ENCODE measurements at regions of chr6 and their contacts with region 1.

Region 1: GRCh38 chr6:3231247-3232016 is 4.0 kb upstream of the TUBB2B start:
- DNase-seq: peak in 4 of 5 donors; percentile 63 to 79 (median 76)
- ATAC-seq: peak; percentile 77 to 87 (median 81)
- H3K4me3 ChIP-seq: peak overlapping the region; percentile 16 to 78 (median 64)
- H3K27ac ChIP-seq: peak overlapping the region; percentile 42 to 81 (median 69)
- H3K4me1 ChIP-seq: peaks cover 2 to 55% (median 38%) of the 10 kb centered on the region in 12 donors
- H3K27me3 ChIP-seq: peaks cover 22 to 87% (median 61%) of the 10 kb centered on the region in 9 donors
- CTCF ChIP-seq: no peak
- POLR2A ChIP-seq: no peak

Region 2: GRCh38 chr6:3139090-3139903 is 92.1 kb before region 1 on chr6:
- intact Hi-C with region 1: loop called in 1 of 10 experiments (anchors 5 kb)
- DNase-seq: peak; percentile 62 to 77 (median 67)
- ATAC-seq: peak; percentile 72 to 94 (median 91)
- H3K4me3 ChIP-seq: no peak overlapping the region
- H3K27ac ChIP-seq: peak overlapping the region in 11 of 12 donors; percentile 20 to 75 (median 53)
- H3K4me1 ChIP-seq: peaks cover 0 to 26% (median 5%) of the 10 kb centered on the region in 12 donors
- H3K27me3 ChIP-seq: no peaks in the 10 kb centered on the region
- CTCF ChIP-seq: no peak
- POLR2A ChIP-seq: no peak

Region 3: DNA sequence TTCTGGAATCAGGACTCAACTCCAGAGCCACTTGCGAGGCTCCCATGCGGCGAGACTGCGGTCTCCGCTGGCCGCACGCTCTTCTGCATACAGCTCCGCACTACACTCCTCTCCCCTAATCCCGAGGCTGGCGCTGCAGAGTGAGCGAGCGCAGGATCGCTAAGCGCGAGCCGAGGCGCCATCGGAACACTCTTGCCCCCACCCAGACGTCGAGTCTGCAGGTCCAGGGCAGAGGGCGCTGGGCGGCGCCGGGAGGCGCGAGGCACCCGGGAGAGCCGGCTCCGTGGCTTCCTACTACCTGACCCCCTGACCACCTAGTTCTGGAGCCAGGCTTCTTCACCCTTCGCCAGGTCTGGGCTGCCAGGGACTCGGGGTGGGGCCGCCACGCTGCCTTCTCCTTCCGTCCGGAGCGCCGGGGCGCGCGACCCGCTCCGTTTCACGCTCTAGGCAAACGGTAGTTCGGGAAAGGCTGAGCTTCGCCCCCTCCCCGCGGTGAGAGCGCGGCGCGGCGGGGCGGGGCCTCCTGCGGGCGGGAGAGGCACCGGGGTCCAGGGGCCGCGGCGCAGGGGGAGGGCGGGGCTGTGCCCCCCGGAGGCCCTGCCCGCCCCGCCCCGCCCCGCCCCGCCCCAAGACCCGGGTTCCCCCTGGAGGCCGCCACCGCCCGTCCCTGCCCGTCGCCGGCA is 68.7 kb before region 1 on chr6:
- intact Hi-C with region 1: loop called in 4 of 10 experiments (anchors 2 to 5 kb)
- DNase-seq: peak; percentile 67 to 86 (median 78)
- ATAC-seq: peak; percentile 51 to 85 (median 82)
- H3K4me3 ChIP-seq: peak overlapping the region; percentile 14 to 88 (median 76)
- H3K27ac ChIP-seq: peak overlapping the region; percentile 74 to 97 (median 90)
- H3K4me1 ChIP-seq: peaks cover 0 to 49% (median 11%) of the 10 kb centered on the region in 12 donors
- H3K27me3 ChIP-seq: no peaks in the 10 kb centered on the region
- CTCF ChIP-seq: peak in 5 of 12 donors; percentile 19 to 37 (median 24)
- POLR2A ChIP-seq: peak in 1 of 2 donors; percentile 62

Measured in heart left ventricle (tissue), 16 donors.